CD8-positive, alpha-beta T cell (primary cell): ENCODE measurements at regions of chr6 and their contacts with region 1.

Region 1: GRCh38 chr6:129818251-129818650 is 42.9 kb downstream of the TMEM244 start:
- DNase-seq: no peak
- ATAC-seq: no peak
- H3K4me3 ChIP-seq: no peak overlapping the region
- H3K4me3 Mint-ChIP-seq: no peak overlapping the region
- H3K27ac ChIP-seq: no peak overlapping the region
- H3K27ac Mint-ChIP-seq: no peak overlapping the region
- H3K4me1 ChIP-seq: no peaks in the 10 kb centered on the region
- H3K4me1 Mint-ChIP-seq: no peaks in the 10 kb centered on the region
- H3K27me3 ChIP-seq: no peaks in the 10 kb centered on the region
- H3K27me3 Mint-ChIP-seq: peaks cover 13% of the 10 kb centered on the region
- CTCF ChIP-seq: no peak

Region 2: GRCh38 chr6:129844118-129844891 is 26.1 kb after region 1 on chr6:
- CTCF ChIA-PET with region 1: no interaction called
- POLR2A ChIA-PET with region 1: no interaction called
- intact Hi-C with region 1: loop called in 1 of 2 experiments (anchors 1 kb)
- DNase-seq: no peak
- ATAC-seq: no peak
- H3K4me3 ChIP-seq: no peak overlapping the region
- H3K4me3 Mint-ChIP-seq: no peak overlapping the region
- H3K27ac ChIP-seq: no peak overlapping the region
- H3K27ac Mint-ChIP-seq: no peak overlapping the region
- H3K4me1 ChIP-seq: no peaks in the 10 kb centered on the region
- H3K4me1 Mint-ChIP-seq: no peaks in the 10 kb centered on the region
- H3K27me3 ChIP-seq: peaks cover 0 to 4% of the 10 kb centered on the region in 2 experiments
- H3K27me3 Mint-ChIP-seq: peaks cover 7% of the 10 kb centered on the region
- CTCF ChIP-seq: no peak